IMR-90 (cell line): ENCODE measurements at regions of chr14 and their contacts with region 1.

Region 1: DNA sequence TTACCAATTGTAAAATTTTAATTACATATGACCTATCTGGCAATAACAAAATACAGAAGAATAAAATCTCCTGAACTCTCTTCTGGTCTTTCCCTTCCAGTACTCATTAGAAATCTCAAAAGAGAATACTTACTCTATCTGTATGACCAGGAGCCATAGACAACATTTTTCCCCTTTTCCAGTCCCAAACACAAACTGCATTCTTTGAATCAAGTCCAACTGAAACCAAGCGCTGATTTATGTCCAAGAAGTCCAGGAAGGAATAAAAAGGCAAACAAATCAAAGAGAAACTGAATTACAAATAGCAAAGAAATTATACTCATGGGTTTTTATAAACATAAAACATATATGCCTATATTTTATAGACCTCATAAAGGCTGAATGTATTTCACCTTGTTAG is 46.7 kb downstream of the EML5 start:
- DNase-seq: peak; percentile 58
- ATAC-seq: peak; percentile 59
- H3K4me3 ChIP-seq: no peak overlapping the region
- H3K27ac ChIP-seq: no peak overlapping the region
- H3K4me1 ChIP-seq: peaks cover 4% of the 10 kb centered on the region; the same call in 1 of the 2 replicates
- H3K27me3 ChIP-seq: no peaks in the 10 kb centered on the region
- CTCF ChIP-seq: no peak
- POLR2A ChIP-seq: no peak
- RAD21 ChIP-seq: no peak

Region 2: DNA sequence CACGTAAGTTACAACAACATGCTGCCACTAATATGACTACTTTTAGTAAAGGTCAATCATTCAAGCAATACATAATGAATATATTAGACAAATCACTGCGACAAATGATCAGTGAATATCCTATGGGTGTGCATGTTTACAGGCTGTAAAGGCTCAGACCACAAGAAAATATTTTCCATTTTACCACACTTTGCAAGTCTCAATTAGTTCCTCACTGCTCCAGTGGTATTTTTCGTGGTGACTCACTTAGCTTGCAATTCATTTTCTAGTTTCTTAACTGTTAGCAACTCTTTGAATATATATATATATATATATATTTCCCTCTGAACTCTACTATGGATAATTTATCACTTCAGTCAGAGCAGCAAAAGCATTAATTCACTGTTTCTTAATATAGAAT is 50.2 kb before region 1 on chr14:
- CTCF ChIA-PET with region 1: no interaction called
- POLR2A ChIA-PET with region 1: no interaction called
- dilution Hi-C with region 1: no loop called
- in situ Hi-C with region 1: no loop called
- intact Hi-C with region 1: loop called (anchors 5 kb)
- DNase-seq: peak; percentile 30
- ATAC-seq: peak; percentile 51
- H3K4me3 ChIP-seq: no peak overlapping the region
- H3K27ac ChIP-seq: no peak overlapping the region
- H3K4me1 ChIP-seq: no peaks in the 10 kb centered on the region
- H3K27me3 ChIP-seq: no peaks in the 10 kb centered on the region
- CTCF ChIP-seq: no peak
- POLR2A ChIP-seq: no peak
- RAD21 ChIP-seq: no peak